AG04450 (cell line): ENCODE measurements at regions of chr15 and their contacts with region 1.

Region 1: GRCh38 chr15:79582650-79583049 is 150.5 kb downstream of the MINAR1 start:
- DNase-seq: no peak
- H3K4me3 ChIP-seq: no peak overlapping the region
- H3K27ac ChIP-seq: no peak overlapping the region
- H3K27me3 ChIP-seq: peaks cover 2% of the 10 kb centered on the region
- CTCF ChIP-seq: no peak

Region 2: GRCh38 chr15:79596051-79596507 is 13.4 kb after region 1 on chr15:
- CTCF ChIA-PET with region 1: interaction called, 18 read pairs
- POLR2A ChIA-PET with region 1: no interaction called
- DNase-seq: peak; percentile 27
- H3K4me3 ChIP-seq: no peak overlapping the region
- H3K27ac ChIP-seq: no peak overlapping the region
- H3K27me3 ChIP-seq: peaks cover 5% of the 10 kb centered on the region
- CTCF ChIP-seq: peak; percentile 83

Region 3: GRCh38 chr15:79629687-79630086 is 47.0 kb after region 1 on chr15:
- CTCF ChIA-PET with region 1: no interaction called
- POLR2A ChIA-PET with region 1: no interaction called
- DNase-seq: no peak
- H3K4me3 ChIP-seq: no peak overlapping the region
- H3K27ac ChIP-seq: no peak overlapping the region
- H3K27me3 ChIP-seq: peaks cover 6% of the 10 kb centered on the region
- CTCF ChIP-seq: no peak